ENCODE measurements at regions of chr7 and their contacts with region 1.

Region 1: DNA sequence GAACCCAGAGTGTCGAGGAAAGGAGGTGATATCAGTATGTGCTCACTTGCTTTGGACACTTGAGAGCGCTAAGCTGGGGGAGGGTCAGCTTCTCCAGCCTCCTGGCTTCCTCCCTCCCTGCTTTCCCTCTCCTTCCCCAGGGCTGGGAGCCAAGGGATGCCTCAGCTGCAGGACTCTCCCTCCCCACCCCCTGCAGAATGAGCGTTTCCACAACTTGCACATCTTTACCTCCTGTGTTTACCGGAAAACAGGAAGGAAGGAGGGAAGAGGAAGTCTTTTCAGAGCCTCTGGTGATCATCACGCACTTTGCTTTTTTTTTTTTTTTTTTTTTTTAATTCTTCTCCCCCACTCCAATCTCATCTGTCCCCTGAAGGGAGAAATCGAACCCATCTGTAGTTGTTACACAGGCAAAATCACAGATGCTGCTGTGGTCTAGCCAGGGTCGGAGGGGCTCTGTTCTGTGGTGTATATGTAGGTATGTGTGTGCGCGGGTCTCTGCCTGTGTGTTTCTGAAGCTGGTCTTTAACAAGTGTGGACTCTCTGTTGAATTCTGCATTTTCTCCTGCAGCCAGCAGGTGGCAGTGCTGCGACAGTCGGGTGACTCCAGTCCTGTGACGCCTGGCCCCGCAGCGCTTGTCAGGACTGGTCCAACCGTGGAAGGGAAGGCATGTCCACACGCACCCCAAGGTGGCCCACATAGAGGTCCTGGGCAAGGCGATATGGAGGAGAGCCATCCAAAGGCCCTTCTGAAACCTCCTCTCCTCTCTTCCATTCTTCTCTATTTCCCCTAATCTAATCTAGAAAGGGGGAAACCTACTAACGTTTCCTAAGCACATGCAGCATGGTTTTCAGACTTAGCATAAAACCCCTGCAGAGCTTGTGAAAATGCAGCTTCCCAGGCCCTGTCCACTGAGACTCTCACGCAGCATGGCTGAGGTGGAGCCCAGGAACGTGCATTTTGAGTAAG is 257.6 kb downstream of the PLXNA4 start:
- DNase-seq: peak; percentile 55 to 69 (median 58)
- H3K4me3 ChIP-seq: no peak overlapping the region
- H3K4me3 Mint-ChIP-seq: peak overlapping the region in 1 of 2 donors; percentile 32
- H3K27ac ChIP-seq: no peak overlapping the region
- H3K27ac Mint-ChIP-seq: peak overlapping the region in 1 of 7 donors; percentile 67
- H3K4me1 ChIP-seq: peaks cover 4 to 6% of the 10 kb centered on the region in 2 donors
- H3K4me1 Mint-ChIP-seq: peaks cover 9% of the 10 kb centered on the region
- H3K27me3 ChIP-seq: peaks cover 14 to 15% of the 10 kb centered on the region in 2 donors
- H3K27me3 Mint-ChIP-seq: peaks cover 23 to 36% (median 27%) of the 10 kb centered on the region in 3 donors
- CTCF ChIP-seq: peak; percentile 89

Region 2: DNA sequence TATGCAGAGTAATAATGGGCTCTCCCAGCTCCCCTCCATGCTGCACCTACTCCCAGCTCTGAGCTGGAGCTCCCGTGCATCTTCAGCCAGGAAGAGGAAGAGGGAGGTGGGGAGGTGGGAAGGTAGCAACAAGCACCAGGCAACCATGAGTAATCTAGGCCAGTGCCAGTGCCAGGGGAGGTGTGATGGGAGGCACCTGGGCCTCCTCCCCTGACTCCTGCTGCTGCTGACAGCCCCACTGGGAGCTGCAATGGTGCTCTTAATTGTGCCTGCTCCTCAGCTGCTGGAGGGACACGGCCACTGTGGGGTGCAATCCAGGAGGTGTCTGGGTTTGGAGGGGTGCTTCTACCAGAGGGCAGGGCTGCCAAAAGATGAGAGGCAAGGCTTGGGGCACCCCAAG is 14.7 kb after region 1 on chr7:
- intact Hi-C with region 1: no loop called
- DNase-seq: no peak
- H3K4me3 ChIP-seq: no peak overlapping the region
- H3K4me3 Mint-ChIP-seq: no peak overlapping the region
- H3K27ac ChIP-seq: no peak overlapping the region
- H3K27ac Mint-ChIP-seq: peak overlapping the region in 1 of 7 donors; percentile 37
- H3K4me1 ChIP-seq: no peaks in the 10 kb centered on the region
- H3K4me1 Mint-ChIP-seq: no peaks in the 10 kb centered on the region
- H3K27me3 ChIP-seq: peaks cover 0 to 2% of the 10 kb centered on the region in 2 donors
- H3K27me3 Mint-ChIP-seq: peaks cover 6 to 14% (median 8%) of the 10 kb centered on the region in 3 donors
- CTCF ChIP-seq: no peak

Region 3: GRCh38 chr7:132351954-132352499 is 33.4 kb after region 1 on chr7:
- intact Hi-C with region 1: no loop called
- DNase-seq: no peak
- H3K4me3 ChIP-seq: no peak overlapping the region
- H3K4me3 Mint-ChIP-seq: peak overlapping the region in 1 of 2 donors; percentile 27
- H3K27ac ChIP-seq: no peak overlapping the region
- H3K27ac Mint-ChIP-seq: no peak overlapping the region
- H3K4me1 ChIP-seq: peaks cover 0 to 5% of the 10 kb centered on the region in 2 donors
- H3K4me1 Mint-ChIP-seq: peaks cover 7% of the 10 kb centered on the region
- H3K27me3 ChIP-seq: peaks cover 0 to 6% of the 10 kb centered on the region in 2 donors
- H3K27me3 Mint-ChIP-seq: peaks cover 13 to 17% (median 14%) of the 10 kb centered on the region in 3 donors
- CTCF ChIP-seq: no peak

Region 4: DNA sequence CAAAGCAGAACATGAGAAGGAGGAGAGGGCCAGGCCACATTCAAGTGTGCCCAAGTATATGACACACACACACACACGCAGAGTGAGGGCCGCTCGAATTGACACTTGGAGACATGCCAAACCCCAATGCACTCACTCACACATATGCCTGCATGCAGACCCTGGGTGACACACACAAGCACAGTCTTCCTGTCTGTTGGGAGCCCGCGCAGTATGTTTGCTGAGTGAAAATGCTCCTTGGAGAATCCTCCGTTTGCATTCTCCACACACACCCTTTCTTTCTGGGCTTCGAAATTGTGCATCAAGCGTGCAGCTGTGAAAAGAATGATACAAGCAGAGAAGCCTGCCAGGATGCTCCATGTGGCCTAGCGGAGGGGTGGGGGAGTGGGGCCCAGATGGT is 136.7 kb after region 1 on chr7:
- intact Hi-C with region 1: no loop called
- DNase-seq: no peak
- H3K4me3 ChIP-seq: no peak overlapping the region
- H3K4me3 Mint-ChIP-seq: no peak overlapping the region
- H3K27ac ChIP-seq: no peak overlapping the region
- H3K27ac Mint-ChIP-seq: no peak overlapping the region
- H3K4me1 ChIP-seq: peaks cover 12% of the 10 kb centered on the region in 2 donors
- H3K4me1 Mint-ChIP-seq: peaks cover 23% of the 10 kb centered on the region
- H3K27me3 ChIP-seq: no peaks in the 10 kb centered on the region
- H3K27me3 Mint-ChIP-seq: peaks cover 3 to 15% (median 3%) of the 10 kb centered on the region in 3 donors
- CTCF ChIP-seq: no peak

Region 5: DNA sequence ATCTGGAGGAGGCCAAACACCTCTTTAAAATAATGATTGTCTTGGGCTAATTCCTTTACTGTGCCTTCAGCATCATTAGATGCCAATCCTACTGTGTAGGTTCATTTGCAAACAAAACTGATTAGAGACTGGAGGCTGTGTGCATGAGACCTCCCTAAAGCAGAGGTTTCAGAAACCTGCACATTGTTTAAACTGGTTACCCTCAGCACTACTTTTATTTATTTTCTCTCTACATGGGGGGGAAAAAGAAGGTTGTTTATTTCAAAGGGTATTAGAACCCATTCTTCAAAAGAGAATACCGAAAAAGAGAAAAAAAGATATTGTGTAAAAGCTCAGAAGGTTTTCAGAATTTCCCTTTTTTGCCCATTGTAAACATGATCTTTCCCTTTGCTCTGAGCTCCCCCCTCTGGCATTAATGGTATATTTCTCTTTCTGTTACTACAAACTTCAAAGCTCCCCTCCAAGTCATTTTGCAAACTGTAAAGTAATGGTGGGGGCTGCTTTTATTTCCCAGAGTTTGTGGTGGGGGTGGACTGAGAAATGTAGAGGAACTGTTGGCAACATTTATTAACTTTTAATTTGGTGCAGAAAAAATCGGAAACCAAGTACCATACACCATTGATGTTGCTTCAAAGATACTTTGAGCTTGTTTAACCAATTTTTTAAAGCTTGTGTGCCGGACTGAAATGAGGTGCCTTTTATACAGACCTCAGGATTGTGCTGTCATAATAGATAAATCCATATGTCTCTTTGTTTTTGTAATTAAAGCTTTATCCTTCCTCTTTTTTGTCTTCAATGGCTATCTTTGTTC is 1115.6 kb after region 1 on chr7:
- intact Hi-C with region 1: loop called in 1 of 2 experiments (anchors 5 kb)
- DNase-seq: no peak
- H3K4me3 ChIP-seq: no peak overlapping the region
- H3K4me3 Mint-ChIP-seq: no peak overlapping the region
- H3K27ac ChIP-seq: no peak overlapping the region
- H3K27ac Mint-ChIP-seq: no peak overlapping the region
- H3K4me1 ChIP-seq: no peaks in the 10 kb centered on the region
- H3K4me1 Mint-ChIP-seq: peaks cover 6% of the 10 kb centered on the region
- H3K27me3 ChIP-seq: no peaks in the 10 kb centered on the region
- H3K27me3 Mint-ChIP-seq: peaks cover 0 to 2% (median 0%) of the 10 kb centered on the region in 3 donors
- CTCF ChIP-seq: peak; percentile 30

Measured in CD14-positive monocyte (primary cell).